ENCODE measurements at regions of chr11 and their contacts with region 1.

Region 1: GRCh38 chr11:33039274-33040032 is at the start of gene TCP11L1:
- DNase-seq: peak; percentile 59
- ATAC-seq: peak; percentile 87
- H3K4me3 ChIP-seq: peak within 1 kb of the TSS; percentile 85
- H3K27ac ChIP-seq: peak within 1 kb of the TSS; percentile 98
- H3K4me1 ChIP-seq: no peaks in the 10 kb centered on the region
- H3K27me3 ChIP-seq: no peaks in the 10 kb centered on the region; a peak in 1 of 4 replicates
- CTCF ChIP-seq: no peak; a peak in 1 of 6 replicates
- EP300 ChIP-seq: no peak
- POLR2A ChIP-seq: peak; percentile 84
- RAD21 ChIP-seq: no peak
- polyA plus RNA-seq, gene TCP11L1: 5.3 to 5.8 TPM

Region 2: GRCh38 chr11:33015621-33016551 is 23.6 kb before region 1 on chr11 and contains the start of gene DEPDC7:
- CTCF ChIA-PET with region 1: interaction called, 3 read pairs
- POLR2A ChIA-PET with region 1: interaction called, 10 read pairs
- RAD21 ChIA-PET with region 1: interaction called, 13 read pairs
- SMC1A ChIA-PET with region 1: interaction called, 16 read pairs
- in situ Hi-C with region 1: no loop called
- intact Hi-C with region 1: no loop called
- DNase-seq: no peak
- ATAC-seq: peak; percentile 77
- H3K4me3 ChIP-seq: peak within 1 kb of the TSS; percentile 50; the same call in 1 of the 2 replicates
- H3K27ac ChIP-seq: no peak within 1 kb of the TSS
- H3K4me1 ChIP-seq: peaks cover 13% of the 10 kb centered on the region
- H3K27me3 ChIP-seq: peaks cover 0 to 5% of the 10 kb centered on the region in 2 experiments; a peak in 2 of 4 replicates
- CTCF ChIP-seq: no peak
- EP300 ChIP-seq: no peak
- POLR2A ChIP-seq: no peak
- RAD21 ChIP-seq: no peak
- polyA plus RNA-seq, gene DEPDC7: 0.06 to 0.26 TPM

Region 3: GRCh38 chr11:33021937-33022336 is 17.5 kb before region 1 on chr11:
- CTCF ChIA-PET with region 1: interaction called, 3 read pairs
- POLR2A ChIA-PET with region 1: interaction called, 9 read pairs
- RAD21 ChIA-PET with region 1: interaction called, 4 read pairs
- SMC1A ChIA-PET with region 1: interaction called, 16 read pairs
- in situ Hi-C with region 1: no loop called
- intact Hi-C with region 1: no loop called
- DNase-seq: no peak
- ATAC-seq: peak; percentile 64
- H3K4me3 ChIP-seq: no peak overlapping the region
- H3K27ac ChIP-seq: no peak overlapping the region
- H3K4me1 ChIP-seq: no peaks in the 10 kb centered on the region
- H3K27me3 ChIP-seq: no peaks in the 10 kb centered on the region; a peak in 1 of 4 replicates
- CTCF ChIP-seq: no peak
- EP300 ChIP-seq: no peak
- POLR2A ChIP-seq: no peak
- RAD21 ChIP-seq: no peak

Measured in GM12878 (cell line).